MCF 10A (cell line): ENCODE measurements at regions of chrX and their contacts with region 1.

Region 1: GRCh38 chrX:41333744-41334259 is at the start of gene DDX3X:
- DNase-seq: peak; percentile 92
- H3K4me3 Mint-ChIP-seq: peak within 1 kb of the TSS; percentile 80
- H3K27ac Mint-ChIP-seq: peak within 1 kb of the TSS; percentile 99
- H3K4me1 Mint-ChIP-seq: peaks cover 23% of the 10 kb centered on the region
- H3K27me3 Mint-ChIP-seq: no peaks in the 10 kb centered on the region
- CTCF ChIP-seq: no peak
- total RNA-seq, gene DDX3X: 290 and 297 TPM in 2 replicates

Region 2: GRCh38 chrX:40380655-40381488 is 952.9 kb before region 1 on chrX:
- CTCF ChIA-PET with region 1: no interaction called
- POLR2A ChIA-PET with region 1: no interaction called
- intact Hi-C with region 1: no loop called
- DNase-seq: no peak
- H3K4me3 Mint-ChIP-seq: no peak overlapping the region
- H3K27ac Mint-ChIP-seq: no peak overlapping the region
- H3K4me1 Mint-ChIP-seq: no peaks in the 10 kb centered on the region
- H3K27me3 Mint-ChIP-seq: peaks cover 42% of the 10 kb centered on the region
- CTCF ChIP-seq: no peak

Region 3: GRCh38 chrX:41347186-41347585 is 13.4 kb after region 1 on chrX:
- CTCF ChIA-PET with region 1: interaction called, 6 read pairs
- POLR2A ChIA-PET with region 1: interaction called, 13 read pairs
- intact Hi-C with region 1: no loop called
- DNase-seq: no peak
- H3K4me3 Mint-ChIP-seq: no peak overlapping the region
- H3K27ac Mint-ChIP-seq: no peak overlapping the region
- H3K4me1 Mint-ChIP-seq: peaks cover 17% of the 10 kb centered on the region
- H3K27me3 Mint-ChIP-seq: no peaks in the 10 kb centered on the region
- CTCF ChIP-seq: no peak

Region 4: GRCh38 chrX:41384041-41384705 is 50.4 kb after region 1 on chrX:
- CTCF ChIA-PET with region 1: interaction called, 4 read pairs
- POLR2A ChIA-PET with region 1: interaction called, 28 read pairs
- intact Hi-C with region 1: loop called (anchors 5 kb)
- DNase-seq: peak; percentile 91
- H3K4me3 Mint-ChIP-seq: no peak overlapping the region
- H3K27ac Mint-ChIP-seq: peak overlapping the region; percentile 63
- H3K4me1 Mint-ChIP-seq: peaks cover 20% of the 10 kb centered on the region
- H3K27me3 Mint-ChIP-seq: no peaks in the 10 kb centered on the region
- CTCF ChIP-seq: no peak

Region 5: DNA sequence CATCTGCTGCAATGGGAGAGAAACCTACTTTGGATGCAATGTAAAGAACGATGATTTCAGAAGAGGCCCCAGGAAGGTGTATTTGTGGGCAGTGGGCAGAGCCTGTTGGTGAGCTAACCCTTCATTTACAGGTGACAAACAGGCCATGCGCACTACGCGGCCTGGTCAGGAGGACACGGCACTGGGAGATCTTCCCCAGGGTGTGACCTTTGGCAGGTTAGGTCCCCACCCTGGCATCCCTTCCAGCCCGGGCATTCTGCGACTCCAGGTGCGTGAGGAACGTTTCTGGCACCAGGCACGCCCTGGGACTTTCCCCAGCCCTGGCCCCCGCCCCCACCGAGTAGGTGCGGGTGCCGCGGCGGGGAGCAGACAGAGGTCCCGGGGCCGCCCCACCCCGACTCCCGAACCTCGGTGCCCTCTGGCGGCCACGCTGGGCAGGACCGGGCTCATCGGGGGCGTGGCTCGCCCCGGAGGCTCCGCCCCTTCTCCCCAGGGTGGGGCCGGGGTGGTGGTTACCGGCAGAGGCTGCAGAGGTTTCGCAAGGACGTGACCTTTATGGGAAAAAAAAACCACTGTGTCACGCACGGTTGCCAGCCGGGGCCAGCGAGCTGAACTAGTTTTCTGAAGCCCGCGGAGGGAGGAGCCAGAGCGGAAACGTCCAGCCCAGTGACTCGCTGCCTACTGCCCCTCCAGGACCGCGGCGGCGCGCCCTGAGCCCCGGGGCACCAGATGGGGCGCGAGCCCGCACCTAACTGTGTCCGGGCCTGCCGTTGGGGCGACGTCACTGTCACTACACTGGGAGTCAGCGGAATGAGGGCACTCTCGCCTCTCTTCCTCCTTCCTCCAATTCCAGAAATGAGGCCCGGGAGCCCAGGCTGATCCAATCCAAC is 108.4 kb after region 1 on chrX:
- CTCF ChIA-PET with region 1: no interaction called
- POLR2A ChIA-PET with region 1: interaction called, 3 read pairs
- intact Hi-C with region 1: loop called (anchors 1 kb)
- DNase-seq: peak; percentile 92
- H3K4me3 Mint-ChIP-seq: peak overlapping the region; percentile 59
- H3K27ac Mint-ChIP-seq: no peak overlapping the region
- H3K4me1 Mint-ChIP-seq: peaks cover 6% of the 10 kb centered on the region
- H3K27me3 Mint-ChIP-seq: peaks cover 9% of the 10 kb centered on the region
- CTCF ChIP-seq: peak; percentile 34